ENCODE measurements at regions of chr1 and their contacts with region 1.

Region 1: DNA sequence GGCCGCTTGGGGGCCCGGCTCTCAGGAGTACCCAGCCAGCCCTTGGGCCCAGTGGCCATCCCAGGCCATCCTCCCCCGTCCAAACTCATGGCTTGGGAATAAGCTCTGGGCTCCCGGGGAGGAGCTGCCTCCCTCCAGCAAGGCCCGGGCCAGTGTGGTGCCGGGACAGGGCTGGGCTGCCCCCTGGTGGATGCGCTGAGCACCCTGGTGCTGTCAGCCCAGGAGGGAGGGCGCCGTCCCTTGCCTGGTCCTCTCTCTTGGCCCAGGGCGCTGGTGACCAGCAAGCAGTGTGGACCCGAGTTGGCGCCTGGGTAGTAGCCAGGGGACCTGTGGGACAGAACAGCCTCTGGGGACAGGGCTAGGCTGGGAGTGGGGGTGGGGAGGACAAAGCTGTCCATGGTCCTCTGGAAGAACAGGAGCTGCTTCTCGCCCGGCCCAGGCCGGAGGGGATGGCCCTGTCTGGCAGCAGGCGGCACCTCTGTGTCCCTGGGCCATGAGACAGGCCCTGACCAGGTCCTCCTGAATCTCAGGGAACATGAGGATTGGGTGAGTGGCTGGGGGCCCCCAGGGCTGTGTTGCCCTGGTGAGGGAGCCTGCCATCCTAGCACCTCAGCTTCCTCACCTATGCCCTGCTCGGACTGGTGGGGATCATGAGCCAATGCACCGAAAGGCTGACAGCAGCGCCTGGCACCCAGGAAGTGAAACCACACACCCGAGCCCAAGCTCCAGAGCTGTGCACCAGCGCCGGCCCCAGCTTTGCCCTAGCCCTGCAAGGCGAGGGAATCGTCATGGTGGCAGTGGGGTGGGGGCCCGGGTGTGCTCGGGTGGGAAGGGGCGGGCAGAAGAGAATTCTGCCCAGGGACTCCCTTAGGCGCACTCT is 9.4 kb downstream of the MORN1 start:
- DNase-seq: peak; percentile 39 to 88
- H3K4me3 ChIP-seq: no peak overlapping the region
- H3K27ac ChIP-seq: no peak overlapping the region
- H3K4me1 ChIP-seq: peaks cover 0 to 2% (median under 1%) of the 10 kb centered on the region in 4 experiments; a peak in 3 of 7 replicates
- H3K27me3 ChIP-seq: no peaks in the 10 kb centered on the region
- CTCF ChIP-seq: peak in 2 of 3 experiments; percentile 93 to 96; a peak in 3 of 4 replicates
- EP300 ChIP-seq: no peak
- POLR2A ChIP-seq: no peak
- RAD21 ChIP-seq: peak; percentile 95 to 98

Region 2: DNA sequence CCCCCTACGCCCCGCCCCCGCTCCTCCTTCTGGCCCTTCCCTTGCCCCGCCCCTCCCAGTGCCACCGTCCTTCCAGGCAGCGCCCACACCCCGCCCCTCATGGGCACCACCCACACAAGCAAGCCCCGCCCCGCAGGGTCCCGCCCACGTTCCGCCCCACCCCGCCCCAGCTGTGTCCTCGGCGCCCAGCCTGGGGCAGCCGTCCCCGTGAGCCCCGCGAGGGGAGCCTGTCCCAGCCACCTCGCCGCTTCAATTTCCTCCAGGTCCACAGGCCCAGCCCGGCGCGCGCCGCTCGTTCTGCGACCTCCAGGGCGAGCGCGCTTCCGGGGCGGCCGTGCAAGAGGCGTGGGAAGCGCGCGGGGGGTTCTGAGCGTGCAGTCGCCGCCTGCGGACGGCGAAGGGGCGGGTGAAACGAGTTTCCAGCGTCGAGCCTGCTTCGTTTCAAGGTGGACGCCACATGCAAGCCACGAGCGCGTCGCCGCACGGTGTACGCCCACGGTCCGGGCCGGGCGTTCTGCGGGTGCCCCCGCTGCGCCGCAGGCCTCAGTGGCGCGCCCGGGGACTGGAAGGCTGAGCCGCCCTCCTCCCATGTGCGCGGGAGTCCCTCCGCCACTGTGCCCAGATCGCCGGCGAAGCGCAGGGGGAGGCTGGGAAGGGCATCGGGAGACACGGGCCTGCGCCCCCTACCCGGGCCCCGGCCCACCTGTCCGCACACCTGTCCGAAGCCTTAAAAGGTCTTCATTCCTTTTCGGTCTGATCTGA is 176.6 kb before region 1 on chr1:
- CTCF ChIA-PET with region 1: interaction called, 154 read pairs
- POLR2A ChIA-PET with region 1: interaction called, 3 read pairs
- DNase-seq: peak; percentile 80 to 98
- H3K4me3 ChIP-seq: peak overlapping the region; percentile 30 to 68 (median 38)
- H3K27ac ChIP-seq: no peak overlapping the region
- H3K4me1 ChIP-seq: peaks cover 3 to 16% (median 9%) of the 10 kb centered on the region in 4 experiments
- H3K27me3 ChIP-seq: peaks cover 0 to 11% (median 6%) of the 10 kb centered on the region in 4 experiments; a peak in 4 of 7 replicates
- CTCF ChIP-seq: no peak
- EP300 ChIP-seq: no peak
- POLR2A ChIP-seq: peak in 1 of 2 experiments; percentile 17; a peak in 1 of 3 replicates
- RAD21 ChIP-seq: no peak

Region 3: GRCh38 chr1:2300004-2300771 is 81.8 kb before region 1 on chr1:
- CTCF ChIA-PET with region 1: interaction called, 11 read pairs
- POLR2A ChIA-PET with region 1: interaction called, 3 read pairs
- DNase-seq: no peak
- H3K4me3 ChIP-seq: no peak overlapping the region
- H3K27ac ChIP-seq: no peak overlapping the region
- H3K4me1 ChIP-seq: peaks cover 0 to 3% (median 0%) of the 10 kb centered on the region in 4 experiments; a peak in 2 of 7 replicates
- H3K27me3 ChIP-seq: no peaks in the 10 kb centered on the region
- CTCF ChIP-seq: no peak
- EP300 ChIP-seq: no peak
- POLR2A ChIP-seq: no peak
- RAD21 ChIP-seq: no peak

Region 4: DNA sequence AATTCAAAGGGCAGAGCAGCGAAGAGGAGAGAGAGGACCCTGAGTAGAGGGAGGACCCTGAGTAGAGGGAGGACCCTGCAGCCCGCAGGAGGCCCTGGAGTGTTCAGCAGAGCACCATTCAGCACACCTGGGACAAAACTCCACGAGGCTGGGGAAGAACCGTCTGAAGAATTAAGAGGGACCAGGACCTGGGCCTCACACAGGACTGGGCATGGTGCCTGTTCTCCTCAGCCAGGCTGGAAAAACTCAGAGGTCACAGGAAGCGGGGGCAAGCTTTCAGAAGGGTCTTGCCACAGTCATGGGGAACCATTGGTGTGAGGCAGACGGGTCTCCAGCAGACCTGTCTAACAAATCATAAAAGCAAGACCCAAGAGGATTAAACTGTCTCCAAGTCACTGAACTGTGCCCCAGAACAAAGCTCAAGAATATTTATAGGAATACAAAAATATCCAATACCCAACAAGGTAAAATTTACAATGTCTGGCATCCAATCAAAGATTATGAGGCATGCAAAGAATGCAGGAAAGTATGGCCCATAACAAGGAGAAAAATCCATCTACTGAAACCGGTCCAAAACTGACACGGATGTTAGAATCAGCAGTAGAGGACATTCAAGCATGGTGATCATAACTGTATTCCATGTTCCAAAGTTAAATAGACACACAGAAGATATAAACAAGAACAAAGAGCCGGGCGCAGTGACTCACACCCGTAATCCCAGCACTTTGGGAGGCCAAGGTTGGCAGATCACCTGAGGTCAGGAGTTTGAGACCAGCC is 21.2 kb before region 1 on chr1:
- CTCF ChIA-PET with region 1: interaction called, 19 read pairs
- POLR2A ChIA-PET with region 1: interaction called, 3 read pairs
- DNase-seq: no peak
- H3K4me3 ChIP-seq: no peak overlapping the region
- H3K27ac ChIP-seq: no peak overlapping the region
- H3K4me1 ChIP-seq: no peaks in the 10 kb centered on the region; a peak in 1 of 7 replicates
- H3K27me3 ChIP-seq: no peaks in the 10 kb centered on the region
- CTCF ChIP-seq: no peak
- EP300 ChIP-seq: no peak
- POLR2A ChIP-seq: no peak
- RAD21 ChIP-seq: no peak

Region 5: GRCh38 chr1:2474933-2475371 is 93.0 kb after region 1 on chr1:
- CTCF ChIA-PET with region 1: no interaction called
- POLR2A ChIA-PET with region 1: no interaction called
- DNase-seq: no peak
- H3K4me3 ChIP-seq: no peak overlapping the region
- H3K27ac ChIP-seq: no peak overlapping the region
- H3K4me1 ChIP-seq: peaks cover 0 to 7% (median 0%) of the 10 kb centered on the region in 4 experiments; a peak in 2 of 7 replicates
- H3K27me3 ChIP-seq: no peaks in the 10 kb centered on the region; a peak in 1 of 7 replicates
- CTCF ChIP-seq: no peak
- EP300 ChIP-seq: no peak
- POLR2A ChIP-seq: no peak
- RAD21 ChIP-seq: no peak